ENCODE measurements at regions of chr19 and their contacts with region 1.

Region 1: DNA sequence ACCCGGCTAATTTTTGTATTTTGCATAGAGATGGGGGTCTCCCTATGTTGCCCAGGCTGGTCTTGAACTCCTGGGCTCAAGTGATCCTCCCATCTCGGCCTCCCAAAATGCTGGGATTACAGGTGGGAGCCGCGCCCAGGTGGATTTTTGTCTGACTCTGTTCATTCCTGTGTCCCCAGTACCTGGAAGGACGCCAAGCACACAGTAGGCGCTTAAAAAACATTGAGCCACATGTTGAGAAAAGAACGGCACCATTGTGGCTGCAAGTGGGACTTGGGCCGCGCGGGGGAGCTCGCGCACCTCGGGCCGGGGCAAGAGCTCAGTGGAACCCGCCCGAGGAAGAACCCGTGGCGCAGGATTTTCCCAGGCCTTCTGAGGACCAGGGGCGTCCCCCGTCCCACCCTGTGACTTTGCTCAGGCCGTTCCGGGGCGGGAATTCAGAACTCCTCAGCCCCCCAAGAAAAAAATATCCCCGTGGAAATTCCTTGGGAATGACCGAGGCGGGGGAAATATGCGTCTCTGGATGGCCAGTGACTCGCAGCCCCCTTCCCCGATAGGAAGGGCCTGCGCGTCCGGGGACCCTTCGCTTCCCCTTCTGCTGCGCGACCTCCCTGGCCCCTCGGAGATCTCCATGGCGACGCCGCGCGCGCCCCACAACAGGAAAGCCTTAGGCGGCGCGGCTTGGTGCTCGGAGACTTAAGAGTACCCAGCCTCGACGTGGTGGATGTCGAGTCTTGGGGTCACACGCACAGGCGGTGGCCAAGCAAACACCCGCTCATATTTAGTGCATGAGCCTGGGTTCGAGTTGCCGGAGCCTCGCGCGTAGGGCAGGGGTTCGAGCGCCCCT is 1.4 kb upstream of the ICAM1 start:
- DNase-seq: peak; percentile 90
- H3K4me3 ChIP-seq: no peak overlapping the region
- H3K27ac ChIP-seq: peak overlapping the region; percentile 73
- H3K4me1 ChIP-seq: peaks cover 36% of the 10 kb centered on the region
- H3K27me3 ChIP-seq: no peaks in the 10 kb centered on the region
- CTCF ChIP-seq: peak; percentile 88 to 93
- POLR2A ChIP-seq: no peak

Region 2: DNA sequence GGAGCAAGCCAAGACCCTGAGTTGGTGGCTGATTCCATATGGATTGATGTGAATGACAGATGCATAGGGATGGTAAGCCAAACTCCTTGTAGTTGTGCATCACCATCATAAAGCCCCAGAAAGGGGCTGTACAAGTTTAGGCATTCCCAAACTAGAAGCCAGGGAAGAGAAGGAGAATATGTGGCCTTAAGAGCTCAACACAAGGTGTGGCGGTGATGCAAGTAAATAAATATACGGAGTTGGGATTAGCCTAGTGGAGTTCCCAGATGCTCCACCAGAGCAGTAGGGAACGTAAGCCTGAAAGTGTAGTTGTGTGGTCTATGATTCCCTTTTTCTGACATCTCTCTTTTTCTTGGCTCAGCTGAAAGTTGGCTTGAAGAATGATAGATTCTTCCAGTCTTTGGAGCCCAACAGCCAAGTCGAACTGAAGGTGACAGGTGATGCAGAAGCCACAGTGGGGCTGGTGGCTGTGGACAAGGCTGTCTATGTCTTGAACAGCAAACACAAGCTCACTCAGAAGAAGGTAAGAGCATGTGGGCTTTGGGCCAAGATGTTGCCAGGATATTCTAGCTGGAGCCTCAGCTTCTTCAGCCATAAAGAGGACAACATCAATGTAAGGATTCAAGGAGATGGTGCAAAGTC is 226.1 kb before region 1 on chr19:
- CTCF ChIA-PET with region 1: no interaction called
- POLR2A ChIA-PET with region 1: no interaction called
- dilution Hi-C with region 1: no loop called
- intact Hi-C with region 1: no loop called
- DNase-seq: no peak
- H3K4me3 ChIP-seq: no peak overlapping the region
- H3K27ac ChIP-seq: no peak overlapping the region
- H3K4me1 ChIP-seq: no peaks in the 10 kb centered on the region
- H3K27me3 ChIP-seq: no peaks in the 10 kb centered on the region
- CTCF ChIP-seq: no peak
- POLR2A ChIP-seq: no peak

Region 3: GRCh38 chr19:10219678-10220077 is 49.9 kb before region 1 on chr19:
- CTCF ChIA-PET with region 1: no interaction called
- POLR2A ChIA-PET with region 1: no interaction called
- dilution Hi-C with region 1: no loop called
- intact Hi-C with region 1: no loop called
- DNase-seq: no peak
- H3K4me3 ChIP-seq: no peak overlapping the region
- H3K27ac ChIP-seq: no peak overlapping the region
- H3K4me1 ChIP-seq: no peaks in the 10 kb centered on the region
- H3K27me3 ChIP-seq: no peaks in the 10 kb centered on the region
- CTCF ChIP-seq: peak in 1 of 2 donors; percentile 26
- POLR2A ChIP-seq: no peak

Region 4: DNA sequence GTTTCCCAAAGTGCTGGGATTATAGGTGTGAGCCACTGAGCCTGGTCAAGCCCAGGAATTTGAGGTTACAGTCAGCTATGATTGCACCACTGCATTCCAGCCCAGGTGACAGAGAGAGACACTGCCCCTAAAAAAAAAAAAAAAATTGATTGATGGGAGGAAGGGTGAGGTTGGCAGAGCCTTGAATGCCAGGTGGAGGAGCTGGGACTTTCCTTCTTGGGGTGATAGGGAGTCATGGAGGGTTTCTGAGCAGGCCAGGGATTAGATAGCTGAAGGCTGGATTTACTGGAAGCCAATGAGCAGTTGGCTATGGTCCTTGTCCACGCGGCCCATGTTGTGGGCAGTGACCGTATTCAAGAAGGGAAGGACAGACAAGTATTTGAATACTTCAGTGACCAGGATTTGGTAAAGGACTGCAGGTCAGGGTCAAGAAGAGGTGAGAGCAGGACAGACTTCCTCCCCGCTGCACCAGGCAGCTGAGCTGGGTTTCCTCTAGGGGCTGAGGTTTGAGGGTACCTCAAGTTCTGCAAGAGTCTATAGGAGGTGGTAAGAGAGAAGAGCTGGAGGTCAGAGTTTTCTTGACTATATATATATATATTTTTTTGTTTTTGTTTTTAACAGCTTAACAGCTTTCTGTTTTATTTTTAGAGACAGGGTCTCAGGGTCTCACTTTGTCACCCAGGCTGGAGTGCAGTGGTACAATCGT is 10.3 kb after region 1 on chr19:
- CTCF ChIA-PET with region 1: interaction called, 14 read pairs
- POLR2A ChIA-PET with region 1: interaction called, 13 read pairs
- dilution Hi-C with region 1: no loop called
- intact Hi-C with region 1: no loop called
- DNase-seq: no peak
- H3K4me3 ChIP-seq: no peak overlapping the region
- H3K27ac ChIP-seq: no peak overlapping the region
- H3K4me1 ChIP-seq: no peaks in the 10 kb centered on the region
- H3K27me3 ChIP-seq: no peaks in the 10 kb centered on the region
- CTCF ChIP-seq: no peak
- POLR2A ChIP-seq: no peak

Region 5: GRCh38 chr19:10292206-10292788 is 22.7 kb after region 1 on chr19:
- CTCF ChIA-PET with region 1: interaction called, 29 read pairs
- POLR2A ChIA-PET with region 1: interaction called, 15 read pairs
- dilution Hi-C with region 1: no loop called
- intact Hi-C with region 1: loop called (anchors 2 kb)
- DNase-seq: peak; percentile 48
- H3K4me3 ChIP-seq: no peak overlapping the region
- H3K27ac ChIP-seq: no peak overlapping the region
- H3K4me1 ChIP-seq: peaks cover 25% of the 10 kb centered on the region
- H3K27me3 ChIP-seq: peaks cover 54 to 71% of the 10 kb centered on the region in 2 experiments
- CTCF ChIP-seq: no peak
- POLR2A ChIP-seq: no peak

Region 6: DNA sequence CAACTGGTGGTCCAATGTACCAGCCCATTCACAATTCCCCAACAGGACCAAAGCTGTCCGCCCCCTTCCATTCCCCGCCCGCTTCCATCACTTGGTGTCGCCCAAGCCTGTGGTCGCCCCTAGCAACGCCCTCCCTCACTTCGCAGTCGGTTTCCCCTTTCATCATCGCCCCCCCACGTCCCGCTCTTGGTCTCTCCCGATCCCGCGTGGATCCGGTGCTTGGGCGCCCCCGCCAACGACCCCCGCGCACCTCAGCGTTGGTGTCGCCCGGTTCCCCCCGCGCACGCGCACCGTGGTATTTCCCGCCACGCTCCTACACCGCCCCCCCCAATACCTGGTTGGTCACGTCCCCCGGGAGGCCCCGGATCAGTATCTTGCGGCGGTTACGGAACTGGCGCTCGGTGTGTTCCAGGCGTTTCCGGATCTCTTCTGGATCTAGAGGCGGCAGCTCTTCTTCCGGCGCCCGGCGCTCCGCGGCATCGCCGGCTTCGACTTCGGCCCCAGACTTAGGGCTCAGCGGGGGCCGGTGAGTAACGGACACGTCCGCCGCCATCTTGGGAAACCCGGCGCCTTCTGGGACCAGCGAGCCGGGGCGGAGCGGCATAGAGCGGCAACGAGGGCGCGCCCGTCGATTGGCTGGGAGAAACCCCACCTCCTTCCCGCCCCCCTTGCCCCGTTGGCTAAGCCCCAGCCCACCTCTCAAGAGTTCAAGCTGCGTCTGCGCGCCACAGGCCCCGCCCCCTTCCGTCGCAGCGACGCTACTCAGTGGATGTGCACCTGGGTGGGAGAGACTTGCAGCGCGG is 63.6 kb after region 1 on chr19 and contains the start of gene RAVER1:
- CTCF ChIA-PET with region 1: interaction called, 23 read pairs
- POLR2A ChIA-PET with region 1: interaction called, 13 read pairs
- dilution Hi-C with region 1: no loop called
- intact Hi-C with region 1: loop called (anchors 1 kb)
- DNase-seq: peak; percentile 97
- H3K4me3 ChIP-seq: peak within 1 kb of the TSS; percentile 31 to 71 (median 47)
- H3K27ac ChIP-seq: peak within 1 kb of the TSS; percentile 78
- H3K4me1 ChIP-seq: peaks cover 16% of the 10 kb centered on the region
- H3K27me3 ChIP-seq: no peaks in the 10 kb centered on the region
- CTCF ChIP-seq: no peak
- POLR2A ChIP-seq: peak; percentile 83
- total RNA-seq, gene RAVER1: 47.6 and 55.1 TPM in 2 replicates

Region 7: DNA sequence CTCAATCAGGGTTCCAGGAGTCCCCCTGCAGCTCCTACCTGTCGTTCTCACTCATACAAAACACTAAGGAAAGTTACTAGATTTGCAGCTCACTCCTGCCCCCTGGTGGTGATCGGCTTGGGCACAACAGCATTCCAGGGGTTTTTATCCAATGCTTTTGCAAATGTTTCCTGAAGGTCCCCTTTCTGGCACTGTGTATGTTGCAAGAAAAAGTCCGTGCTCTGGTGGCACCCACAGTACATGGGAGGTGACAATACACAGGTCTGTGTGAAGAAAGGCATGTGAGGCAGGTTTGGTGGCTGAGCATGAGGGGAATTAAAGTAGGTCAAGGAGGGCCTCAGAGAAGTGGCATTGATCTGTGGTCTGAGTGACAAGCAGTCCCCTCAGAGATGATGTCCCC is 119.4 kb after region 1 on chr19:
- CTCF ChIA-PET with region 1: interaction called, 411 read pairs
- POLR2A ChIA-PET with region 1: interaction called, 14 read pairs
- dilution Hi-C with region 1: no loop called
- intact Hi-C with region 1: loop called (anchors 1 kb)
- DNase-seq: peak; percentile 85
- H3K4me3 ChIP-seq: no peak overlapping the region
- H3K27ac ChIP-seq: no peak overlapping the region
- H3K4me1 ChIP-seq: no peaks in the 10 kb centered on the region
- H3K27me3 ChIP-seq: no peaks in the 10 kb centered on the region
- CTCF ChIP-seq: peak; percentile 88 to 93
- POLR2A ChIP-seq: peak; percentile 43

Measured in endothelial cell of umbilical vein (primary cell).